CD8-positive, alpha-beta memory T cell (primary cell): ENCODE measurements at regions of chr4 and their contacts with region 1.

Region 1: GRCh38 chr4:128782076-128782715 is 27.3 kb upstream of the JADE1 start:
- DNase-seq: peak; percentile 35 to 72 (median 50)
- H3K4me3 ChIP-seq: no peak overlapping the region
- H3K4me3 Mint-ChIP-seq: no peak overlapping the region
- H3K27ac ChIP-seq: no peak overlapping the region
- H3K27ac Mint-ChIP-seq: peak overlapping the region in 1 of 8 donors; percentile 25
- H3K4me1 ChIP-seq: no peaks in the 10 kb centered on the region
- H3K4me1 Mint-ChIP-seq: no peaks in the 10 kb centered on the region
- H3K27me3 ChIP-seq: no peaks in the 10 kb centered on the region
- H3K27me3 Mint-ChIP-seq: peaks cover 0 to 7% of the 10 kb centered on the region in 2 donors

Region 2: DNA sequence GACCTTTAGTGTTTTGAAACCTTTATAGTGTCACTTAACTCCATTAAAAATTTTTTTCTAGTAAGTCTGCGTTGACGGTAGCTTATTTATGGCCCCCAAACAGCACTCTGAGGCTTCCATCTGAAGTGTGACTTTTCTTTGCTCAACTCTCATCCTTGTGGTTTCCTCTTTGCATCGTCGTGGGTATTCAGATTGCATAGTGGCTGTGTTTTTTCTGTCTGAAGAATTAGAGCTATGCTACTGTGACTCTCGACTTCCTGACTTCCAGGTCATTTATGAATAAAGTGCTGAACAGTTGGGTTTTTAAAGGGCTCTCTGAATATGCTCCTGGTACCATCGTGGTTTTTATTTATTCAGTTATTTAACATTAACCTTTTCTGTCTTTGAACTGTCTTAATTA is 72.2 kb after region 1 on chr4:
- CTCF ChIA-PET with region 1: interaction called, 10 read pairs
- POLR2A ChIA-PET with region 1: no interaction called
- DNase-seq: peak in 2 of 5 donors; percentile 51 to 61
- H3K4me3 ChIP-seq: no peak overlapping the region
- H3K4me3 Mint-ChIP-seq: peak overlapping the region in 6 of 7 donors; percentile 32 to 62 (median 56)
- H3K27ac ChIP-seq: peak overlapping the region; percentile 11
- H3K27ac Mint-ChIP-seq: peak overlapping the region; percentile 40 to 94 (median 86)
- H3K4me1 ChIP-seq: peaks cover 18% of the 10 kb centered on the region
- H3K4me1 Mint-ChIP-seq: peaks cover 32 to 44% (median 37%) of the 10 kb centered on the region in 3 donors
- H3K27me3 ChIP-seq: no peaks in the 10 kb centered on the region
- H3K27me3 Mint-ChIP-seq: no peaks in the 10 kb centered on the region

Region 3: GRCh38 chr4:128863312-128864075 is 81.3 kb after region 1 on chr4:
- CTCF ChIA-PET with region 1: interaction called, 19 read pairs
- POLR2A ChIA-PET with region 1: no interaction called
- DNase-seq: peak; percentile 50 to 74 (median 63)
- H3K4me3 ChIP-seq: no peak overlapping the region
- H3K4me3 Mint-ChIP-seq: peak overlapping the region in 2 of 7 donors; percentile 27 to 29
- H3K27ac ChIP-seq: no peak overlapping the region
- H3K27ac Mint-ChIP-seq: peak overlapping the region; percentile 62 to 95 (median 75)
- H3K4me1 ChIP-seq: peaks cover 23% of the 10 kb centered on the region
- H3K4me1 Mint-ChIP-seq: peaks cover 35 to 43% (median 41%) of the 10 kb centered on the region in 3 donors
- H3K27me3 ChIP-seq: no peaks in the 10 kb centered on the region
- H3K27me3 Mint-ChIP-seq: peaks cover 0 to 1% of the 10 kb centered on the region in 2 donors